Mammary epithelial cell (primary cell): ENCODE measurements at regions of chr5 and their contacts with region 1.

Region 1: DNA sequence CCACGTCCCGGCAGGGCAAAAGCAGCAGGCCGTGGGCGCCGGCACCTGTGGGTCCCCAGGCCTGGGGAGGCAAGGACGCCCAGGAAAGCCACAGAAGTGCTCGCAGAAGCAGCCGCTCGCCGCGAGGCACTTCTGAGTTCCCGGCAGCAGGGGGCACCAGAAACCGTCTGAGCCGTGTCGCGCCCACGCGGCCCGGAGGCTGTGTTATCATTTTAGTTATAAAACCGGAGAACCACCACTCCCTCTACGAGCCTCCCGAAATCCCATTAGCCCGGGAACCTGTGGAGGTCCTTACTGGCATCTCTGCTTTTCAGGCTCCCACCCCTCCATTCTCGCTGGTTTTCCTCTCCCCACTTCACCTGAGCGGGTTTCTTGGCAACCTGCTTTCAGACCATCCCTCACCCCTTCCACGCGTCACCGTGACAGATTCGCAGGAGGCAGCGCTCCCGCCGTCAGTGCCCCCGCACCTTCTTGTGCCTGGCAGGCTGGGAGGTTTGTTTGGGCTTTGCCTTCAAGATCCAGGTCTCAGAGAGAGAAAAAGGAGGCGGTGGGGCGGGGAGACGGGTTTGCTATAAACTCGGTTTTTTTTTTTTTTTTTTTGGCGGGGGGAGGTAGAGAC is 2.3 kb downstream of the GDNF start:
- DNase-seq: peak; percentile 79
- H3K4me3 ChIP-seq: peak overlapping the region; percentile 37 to 59 (median 57)
- H3K27ac ChIP-seq: no peak overlapping the region
- H3K4me1 ChIP-seq: peaks cover 41% of the 10 kb centered on the region
- H3K27me3 ChIP-seq: no peaks in the 10 kb centered on the region
- CTCF ChIP-seq: peak; percentile 69 to 93

Region 2: DNA sequence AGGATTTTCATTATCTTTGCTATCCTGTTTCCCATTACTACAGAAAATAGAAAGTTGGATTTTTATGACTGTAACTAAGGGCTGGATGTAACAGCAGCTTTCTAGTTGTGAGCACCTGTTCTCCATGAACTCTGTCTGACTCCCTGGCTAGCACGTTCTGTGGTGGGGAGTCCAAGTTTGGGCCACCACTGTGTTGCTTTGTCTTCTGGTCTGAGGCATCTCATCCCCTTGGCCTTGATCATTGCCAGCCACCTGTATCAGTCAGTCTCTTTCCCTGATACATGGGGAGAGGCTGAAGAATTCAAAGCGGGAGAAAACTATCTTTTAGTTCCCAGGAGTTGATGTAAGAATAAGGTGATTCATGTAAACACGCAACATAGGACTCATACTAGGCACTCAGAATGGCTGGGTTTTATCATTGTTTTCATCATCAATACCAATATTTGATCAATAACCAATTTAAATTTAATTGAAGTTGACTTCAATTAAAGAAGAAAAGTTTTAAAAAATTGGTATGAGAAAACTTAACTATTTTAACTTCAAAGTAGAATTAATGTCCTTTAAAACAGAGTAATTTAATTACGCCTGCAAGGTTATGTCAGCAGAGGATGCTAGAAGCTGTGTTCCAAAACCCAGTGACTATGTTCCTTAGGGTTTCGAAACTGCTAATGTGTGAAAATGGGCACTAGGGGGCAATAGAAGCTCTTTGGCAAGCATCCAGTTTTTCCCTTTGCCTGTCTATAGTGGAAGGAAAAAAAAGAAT is 424.8 kb before region 1 on chr5:
- CTCF ChIA-PET with region 1: no interaction called
- dilution Hi-C with region 1: no loop called
- in situ Hi-C with region 1: no loop called
- intact Hi-C with region 1: loop called (anchors 1 kb)
- DNase-seq: peak; percentile 73
- H3K4me3 ChIP-seq: no peak overlapping the region
- H3K27ac ChIP-seq: no peak overlapping the region
- H3K4me1 ChIP-seq: no peaks in the 10 kb centered on the region
- H3K27me3 ChIP-seq: no peaks in the 10 kb centered on the region
- CTCF ChIP-seq: peak; percentile 97 to 99

Region 3: GRCh38 chr5:37847978-37848425 is 10.5 kb after region 1 on chr5:
- CTCF ChIA-PET with region 1: no interaction called
- dilution Hi-C with region 1: no loop called
- in situ Hi-C with region 1: no loop called
- intact Hi-C with region 1: loop called (anchors 1 kb)
- DNase-seq: peak; percentile 94
- H3K4me3 ChIP-seq: no peak overlapping the region
- H3K27ac ChIP-seq: peak overlapping the region; percentile 52
- H3K4me1 ChIP-seq: peaks cover 32% of the 10 kb centered on the region
- H3K27me3 ChIP-seq: no peaks in the 10 kb centered on the region
- CTCF ChIP-seq: no peak

Region 4: DNA sequence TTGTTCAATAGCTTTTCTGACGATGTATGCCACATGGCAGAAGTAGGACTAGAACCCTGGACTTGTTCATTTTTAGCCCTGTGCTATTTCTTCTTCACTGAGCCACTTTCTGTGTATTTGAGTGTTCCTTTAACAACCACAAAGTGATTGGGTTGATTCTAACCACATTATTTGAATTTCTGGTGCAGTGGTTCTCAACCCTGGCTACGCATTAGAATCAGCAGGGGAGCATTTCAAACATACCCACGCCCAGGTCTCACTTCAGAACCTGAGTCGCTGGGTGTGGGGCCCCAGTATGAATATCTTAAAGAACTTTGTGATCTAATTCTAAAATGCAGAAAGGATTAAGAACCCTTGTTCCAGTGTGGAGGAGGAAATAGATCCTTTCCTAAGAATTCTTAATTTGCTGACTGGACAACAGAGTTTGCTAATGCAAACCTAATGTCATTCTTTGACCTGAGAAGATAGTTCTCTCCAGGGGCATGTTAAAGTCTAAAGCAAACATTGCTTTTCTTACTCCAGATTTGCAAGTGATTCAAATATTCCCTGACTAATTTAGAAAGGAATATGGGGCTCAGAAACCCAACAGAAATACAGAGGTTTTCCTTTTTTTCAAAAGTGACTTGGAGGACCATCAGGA is 77.7 kb after region 1 on chr5:
- CTCF ChIA-PET with region 1: no interaction called
- dilution Hi-C with region 1: loop called (anchors 5 kb)
- in situ Hi-C with region 1: no loop called
- intact Hi-C with region 1: no loop called
- DNase-seq: no peak
- H3K4me3 ChIP-seq: no peak overlapping the region
- H3K27ac ChIP-seq: no peak overlapping the region
- H3K4me1 ChIP-seq: peaks cover 6% of the 10 kb centered on the region
- H3K27me3 ChIP-seq: no peaks in the 10 kb centered on the region
- CTCF ChIP-seq: no peak

Region 5: DNA sequence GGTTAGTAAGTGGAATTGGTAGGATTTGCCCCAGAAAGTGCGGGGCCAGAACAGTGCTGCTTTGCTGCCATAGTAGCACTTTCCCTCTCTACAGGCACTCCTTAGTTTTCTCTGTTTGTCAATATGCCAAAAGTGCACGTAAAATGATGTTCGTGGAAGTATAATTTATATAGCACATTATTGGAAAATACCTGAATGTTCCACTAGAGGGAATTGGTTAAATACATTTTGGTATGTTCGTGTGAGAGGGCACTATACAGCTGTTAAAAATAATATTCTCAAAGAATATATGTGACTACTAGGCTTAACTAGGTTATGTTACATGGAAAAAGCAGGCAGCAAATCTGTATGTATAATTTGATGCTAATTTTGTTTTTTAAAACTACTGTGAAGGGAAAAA is 186.3 kb after region 1 on chr5:
- CTCF ChIA-PET with region 1: no interaction called
- dilution Hi-C with region 1: no loop called
- in situ Hi-C with region 1: no loop called
- intact Hi-C with region 1: loop called (anchors 1 kb)
- DNase-seq: no peak
- H3K4me3 ChIP-seq: no peak overlapping the region
- H3K27ac ChIP-seq: no peak overlapping the region
- H3K4me1 ChIP-seq: no peaks in the 10 kb centered on the region
- H3K27me3 ChIP-seq: no peaks in the 10 kb centered on the region
- CTCF ChIP-seq: peak; percentile 23 to 32

Region 6: GRCh38 chr5:38404667-38405276 is 567.2 kb after region 1 on chr5:
- CTCF ChIA-PET with region 1: no interaction called
- dilution Hi-C with region 1: no loop called
- in situ Hi-C with region 1: no loop called
- intact Hi-C with region 1: loop called (anchors 10 kb)
- DNase-seq: peak; percentile 36
- H3K4me3 ChIP-seq: no peak overlapping the region
- H3K27ac ChIP-seq: no peak overlapping the region
- H3K4me1 ChIP-seq: no peaks in the 10 kb centered on the region
- H3K27me3 ChIP-seq: no peaks in the 10 kb centered on the region
- CTCF ChIP-seq: peak; percentile 59 to 87